AG04449 (cell line): ENCODE measurements at regions of chrX and their contacts with region 1.

Region 1: GRCh38 chrX:152958524-152959465 is 35.1 kb downstream of the PNMA5 start:
- DNase-seq: peak; percentile 40
- H3K4me3 ChIP-seq: peak overlapping the region; percentile 23
- CTCF ChIP-seq: peak; percentile 58

Region 2: GRCh38 chrX:152941328-152942106 is 17.3 kb before region 1 on chrX:
- CTCF ChIA-PET with region 1: interaction called, 26 read pairs
- POLR2A ChIA-PET with region 1: interaction called, 3 read pairs
- DNase-seq: peak; percentile 45
- H3K4me3 ChIP-seq: peak overlapping the region; percentile 66
- CTCF ChIP-seq: peak; percentile 81

Region 3: DNA sequence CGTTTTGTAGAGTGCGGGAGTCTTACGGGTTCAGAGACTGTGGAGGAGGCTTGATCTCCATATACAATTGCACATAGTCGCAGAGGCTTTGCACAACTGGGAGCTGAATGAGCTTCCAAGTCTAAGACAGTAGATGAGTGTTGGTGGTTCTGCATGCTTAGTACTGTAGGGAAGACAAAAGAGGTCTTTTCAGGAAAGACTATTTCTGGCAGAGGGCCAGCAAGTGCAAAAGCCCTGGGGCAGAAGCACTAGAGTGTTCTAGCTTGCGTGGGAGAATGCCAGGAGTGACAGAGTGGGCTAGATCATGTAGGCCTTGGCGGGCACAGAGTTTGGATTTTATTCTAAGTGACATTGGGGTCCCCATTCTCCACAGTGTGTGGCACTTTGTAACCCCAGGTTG is 10.8 kb after region 1 on chrX:
- CTCF ChIA-PET with region 1: interaction called, 16 read pairs
- POLR2A ChIA-PET with region 1: no interaction called
- DNase-seq: no peak
- H3K4me3 ChIP-seq: no peak overlapping the region
- CTCF ChIP-seq: no peak

Region 4: GRCh38 chrX:153032397-153033118 is 73.8 kb after region 1 on chrX:
- CTCF ChIA-PET with region 1: interaction called, 10 read pairs
- POLR2A ChIA-PET with region 1: no interaction called
- DNase-seq: no peak
- H3K4me3 ChIP-seq: peak overlapping the region; percentile 36
- CTCF ChIP-seq: peak; percentile 81